AG04449 (cell line): ENCODE measurements at regions of chr14 and their contacts with region 1.

Region 1: DNA sequence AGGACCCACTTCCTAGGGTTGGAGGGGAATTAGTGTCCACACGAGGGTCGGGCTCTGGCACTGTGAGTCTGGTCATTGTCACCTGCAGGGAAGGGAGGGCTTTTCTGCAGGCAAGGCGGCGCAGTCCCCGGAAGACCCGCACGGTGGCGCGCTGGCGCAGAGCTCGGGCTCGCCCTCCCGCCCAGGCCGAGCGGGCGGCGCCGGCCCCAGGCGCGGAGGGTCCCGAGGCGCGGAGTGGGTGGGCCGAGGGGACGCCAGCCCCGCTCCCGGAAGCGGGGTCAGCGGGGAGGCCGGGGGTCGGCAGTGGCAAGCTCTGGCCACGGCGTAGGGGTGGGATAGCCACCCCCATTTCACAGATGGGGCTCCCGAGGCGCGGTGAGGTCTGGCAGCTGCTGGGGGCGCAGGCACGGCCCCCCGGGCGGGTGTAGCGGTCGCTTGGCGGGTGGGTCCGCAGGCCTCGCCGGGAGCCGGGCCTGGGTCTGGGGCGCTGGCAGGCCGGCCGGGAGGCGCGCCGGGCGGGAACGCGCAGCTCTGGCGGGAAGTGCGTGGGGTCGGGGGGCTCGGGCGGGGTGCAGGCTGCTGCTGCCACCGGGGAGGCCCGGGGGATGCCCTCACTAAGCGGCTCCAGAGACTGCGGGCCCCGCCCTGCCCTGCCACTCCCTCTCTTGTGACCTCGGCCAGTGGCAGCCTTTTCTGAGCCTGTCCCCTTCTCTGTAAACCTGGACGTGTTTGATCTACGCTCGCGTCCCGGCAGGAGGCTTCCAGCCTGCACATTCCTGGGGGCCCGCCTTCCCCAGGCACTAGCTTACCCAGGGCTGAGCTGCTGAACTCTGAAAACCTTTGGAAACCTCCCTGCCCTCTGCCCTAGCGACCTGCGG is 46.1 kb downstream of the CYP46A1 start:
- DNase-seq: no peak
- H3K4me3 ChIP-seq: peak overlapping the region; percentile 59
- CTCF ChIP-seq: peak; percentile 89

Region 2: DNA sequence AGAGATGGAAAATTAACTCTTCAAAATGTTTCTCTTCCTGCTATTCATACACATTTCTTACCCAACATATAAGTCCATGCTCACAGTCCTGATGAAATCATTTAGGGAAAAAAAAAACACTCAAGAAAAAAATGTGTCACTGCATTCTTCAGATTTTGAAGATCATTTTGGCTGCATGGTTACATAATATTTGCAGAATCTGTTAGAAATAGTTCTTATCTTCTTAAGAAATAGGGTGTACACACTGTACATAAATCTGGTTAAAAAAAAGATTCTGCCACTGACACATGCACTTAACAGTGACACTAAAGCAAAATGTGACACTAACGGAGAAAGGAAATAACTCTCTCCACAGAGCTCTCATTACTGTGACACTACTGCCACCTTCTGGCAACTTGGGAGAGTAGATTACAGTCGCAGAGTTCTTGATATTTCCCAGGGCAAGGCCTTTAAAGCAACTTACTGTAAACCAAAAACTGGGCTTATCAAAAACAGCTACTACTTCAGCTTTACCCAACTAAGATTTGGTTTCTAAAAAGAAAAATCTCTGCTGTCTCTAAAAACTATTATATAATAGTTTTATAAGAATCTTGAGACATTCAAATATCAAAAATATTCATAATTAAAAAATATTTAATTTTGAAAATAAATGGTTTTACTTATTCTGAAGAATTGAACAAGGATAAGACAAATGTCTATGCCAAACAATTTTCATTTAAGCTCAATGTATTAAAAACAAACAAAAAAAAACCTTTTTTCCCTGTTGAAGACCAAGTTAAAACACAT is 314.5 kb before region 1 on chr14:
- CTCF ChIA-PET with region 1: no interaction called
- POLR2A ChIA-PET with region 1: no interaction called
- DNase-seq: peak; percentile 46
- H3K4me3 ChIP-seq: no peak overlapping the region
- CTCF ChIP-seq: peak; percentile 73

Region 3: GRCh38 chr14:99689266-99690236 is 40.7 kb before region 1 on chr14:
- CTCF ChIA-PET with region 1: interaction called, 17 read pairs
- POLR2A ChIA-PET with region 1: no interaction called
- DNase-seq: no peak
- H3K4me3 ChIP-seq: no peak overlapping the region
- CTCF ChIP-seq: no peak

Region 4: GRCh38 chr14:99718031-99718810 is 12.0 kb before region 1 on chr14:
- CTCF ChIA-PET with region 1: interaction called, 44 read pairs
- POLR2A ChIA-PET with region 1: interaction called, 3 read pairs
- DNase-seq: no peak
- H3K4me3 ChIP-seq: no peak overlapping the region
- CTCF ChIP-seq: no peak

Region 5: DNA sequence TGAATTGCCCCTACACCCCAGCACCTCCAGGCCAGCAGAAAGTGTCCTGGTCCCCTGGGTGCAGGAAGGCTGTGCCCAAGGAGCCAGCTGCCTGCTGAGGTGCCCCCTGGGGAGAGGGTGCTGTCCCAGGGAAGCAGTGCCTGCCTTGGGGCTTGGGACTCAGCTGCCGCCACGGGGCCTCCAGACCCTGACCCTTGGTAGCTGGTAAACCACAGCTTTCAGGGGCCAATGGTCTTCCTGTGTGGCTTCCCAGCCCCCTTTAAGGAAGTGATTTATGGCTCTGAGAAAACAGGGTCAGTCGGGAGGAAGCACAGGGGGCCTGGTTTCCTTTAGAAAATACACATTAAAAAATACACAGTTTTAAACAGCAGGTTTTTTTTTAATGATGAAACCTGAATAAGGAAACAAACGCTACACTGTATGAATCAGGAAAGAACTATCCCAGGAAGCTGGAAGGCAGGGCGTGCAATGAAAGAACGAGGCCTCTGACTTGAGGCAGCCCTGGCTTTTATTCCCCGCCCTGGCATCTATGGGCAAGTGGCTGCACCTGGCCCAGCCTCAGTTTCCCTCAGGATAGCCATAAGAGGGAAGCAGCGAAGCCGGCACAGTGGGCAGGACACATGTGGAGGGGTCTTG is 22.4 kb after region 1 on chr14:
- CTCF ChIA-PET with region 1: interaction called, 13 read pairs
- POLR2A ChIA-PET with region 1: no interaction called
- DNase-seq: no peak
- H3K4me3 ChIP-seq: no peak overlapping the region
- CTCF ChIP-seq: no peak

Region 6: DNA sequence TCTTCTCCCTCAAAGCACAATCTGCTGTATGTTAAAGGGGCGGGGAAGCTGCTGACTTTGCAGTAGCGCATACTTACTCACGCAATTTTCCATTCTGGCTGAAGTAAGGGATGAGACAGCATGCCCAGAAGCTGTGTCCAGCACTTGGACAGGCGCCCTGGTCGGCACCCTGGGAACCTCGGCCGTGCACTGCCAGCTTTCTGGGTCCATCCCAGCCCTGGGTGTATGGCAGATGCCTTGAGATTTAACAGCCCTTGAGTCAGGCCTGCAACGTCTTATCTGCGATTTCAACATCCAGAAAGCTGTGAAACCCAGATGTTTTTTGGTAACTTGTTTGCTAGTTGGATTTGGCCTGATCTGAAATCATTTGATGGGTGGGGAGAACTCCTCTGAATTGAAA is 79.1 kb after region 1 on chr14:
- CTCF ChIA-PET with region 1: interaction called, 20 read pairs
- POLR2A ChIA-PET with region 1: no interaction called
- DNase-seq: no peak
- H3K4me3 ChIP-seq: no peak overlapping the region
- CTCF ChIP-seq: no peak

Region 7: GRCh38 chr14:99899578-99900178 is 169.4 kb after region 1 on chr14:
- CTCF ChIA-PET with region 1: interaction called, 325 read pairs
- POLR2A ChIA-PET with region 1: no interaction called
- DNase-seq: no peak
- H3K4me3 ChIP-seq: no peak overlapping the region
- CTCF ChIP-seq: peak; percentile 32